OCI-LY7 (cell line): ENCODE measurements at regions of chr1 and their contacts with region 1.

Region 1: GRCh38 chr1:248825909-248826760 is at the start of gene SH3BP5L:
- DNase-seq: peak; percentile 95
- H3K4me3 ChIP-seq: peak within 1 kb of the TSS; percentile 73
- H3K27ac ChIP-seq: peak within 1 kb of the TSS; percentile 78
- H3K4me1 ChIP-seq: peaks cover 40% of the 10 kb centered on the region
- CTCF ChIP-seq: peak; percentile 95
- total RNA-seq, gene SH3BP5L: 14.5 and 16.9 TPM in 2 replicates

Region 2: DNA sequence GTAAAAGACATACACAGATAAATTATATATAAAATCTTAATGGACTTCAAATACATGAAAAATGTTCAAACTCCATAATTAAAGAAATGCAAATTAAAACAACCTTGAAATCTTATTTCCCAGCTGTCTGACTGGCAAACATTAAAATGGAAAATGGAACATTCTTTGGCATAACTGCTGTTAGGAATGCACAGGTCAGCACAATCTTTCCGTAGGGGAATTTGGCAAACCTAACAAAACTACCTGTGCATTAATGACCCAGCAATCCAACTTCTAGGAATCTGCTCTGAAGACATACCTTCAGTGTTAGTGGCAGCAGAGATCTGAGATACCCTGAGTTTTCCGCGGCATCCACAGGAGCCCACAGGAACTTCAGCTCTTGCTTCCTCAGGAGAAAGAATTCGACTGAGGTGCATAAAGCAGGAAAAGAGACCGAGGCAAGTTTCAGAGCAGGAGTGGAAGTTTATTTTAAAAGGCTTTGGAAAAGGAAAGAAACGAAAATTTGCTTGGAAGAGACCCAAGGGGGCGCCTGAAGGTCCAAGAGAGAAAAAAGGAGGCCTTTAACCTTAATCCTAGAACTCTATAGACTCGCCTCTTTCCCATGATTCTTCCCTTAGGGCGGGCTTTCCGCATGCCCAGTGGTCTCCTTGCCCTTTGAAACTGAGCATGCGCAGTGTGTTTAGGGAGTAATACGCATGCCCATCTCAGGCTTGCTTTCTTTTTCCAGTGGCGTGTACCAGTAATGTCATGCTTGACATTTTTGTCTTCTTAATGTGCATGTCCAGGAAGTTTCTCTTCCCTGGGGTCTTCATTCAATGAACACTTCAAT is 95.4 kb before region 1 on chr1:
- CTCF ChIA-PET with region 1: no interaction called
- POLR2A ChIA-PET with region 1: no interaction called
- intact Hi-C with region 1: no loop called
- DNase-seq: no peak
- H3K4me3 ChIP-seq: no peak overlapping the region
- H3K27ac ChIP-seq: no peak overlapping the region
- H3K4me1 ChIP-seq: no peaks in the 10 kb centered on the region
- CTCF ChIP-seq: no peak

Region 3: DNA sequence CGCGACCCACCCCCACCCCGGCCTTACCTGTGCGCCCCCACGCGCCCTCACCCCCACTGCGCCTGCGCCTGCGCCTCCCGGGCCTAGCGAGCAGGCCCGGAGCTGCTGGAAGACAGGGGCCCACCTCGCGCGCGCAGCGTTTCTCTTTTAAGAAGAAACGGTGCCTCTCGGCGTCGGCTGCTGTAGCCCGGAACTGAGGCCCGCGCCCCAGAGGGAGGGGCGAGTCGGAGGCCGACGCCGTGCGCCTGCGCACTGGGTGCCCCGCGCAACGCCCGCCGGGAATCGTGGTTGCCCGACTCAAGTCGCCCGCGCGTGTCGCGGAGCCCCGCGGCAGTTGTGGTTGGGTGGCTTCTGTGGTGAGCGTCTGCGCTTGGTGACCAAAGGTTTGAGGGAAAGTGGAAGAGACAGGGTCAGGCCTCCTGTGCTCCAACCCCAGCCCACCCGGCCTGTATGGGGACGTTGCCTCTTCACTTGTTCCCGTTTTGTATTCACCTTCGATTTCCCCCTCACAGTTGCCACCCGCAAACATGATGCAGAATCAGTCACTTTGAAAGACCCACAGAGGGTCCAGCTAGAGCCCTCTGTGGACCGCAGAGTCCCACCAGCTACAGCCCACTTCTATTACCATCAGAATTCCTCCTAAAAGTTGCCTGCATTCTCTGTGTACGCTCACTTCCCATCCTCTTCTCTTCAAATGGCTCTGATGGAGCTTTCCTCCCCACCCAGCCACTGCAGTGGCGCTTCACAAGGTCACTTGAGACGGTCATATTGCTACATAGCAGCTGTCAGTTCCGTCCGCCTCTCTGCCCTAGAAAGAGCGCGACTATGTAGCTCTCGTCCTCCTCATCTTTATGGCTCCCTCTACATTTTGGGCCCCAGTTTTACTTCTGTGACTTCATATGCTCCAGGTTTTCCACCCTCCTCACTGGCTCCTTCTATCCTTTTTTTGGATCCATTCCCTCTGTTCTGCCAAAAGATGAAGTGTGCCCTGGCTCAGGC is 33.1 kb after region 1 on chr1 and contains the start of gene ZNF692:
- CTCF ChIA-PET with region 1: interaction called, 4 read pairs
- POLR2A ChIA-PET with region 1: interaction called, 31 read pairs
- intact Hi-C with region 1: loop called (anchors 1 kb)
- DNase-seq: peak; percentile 99
- H3K4me3 ChIP-seq: peak within 1 kb of the TSS; percentile 79
- H3K27ac ChIP-seq: peak within 1 kb of the TSS; percentile 72
- H3K4me1 ChIP-seq: peaks cover 39% of the 10 kb centered on the region
- CTCF ChIP-seq: no peak
- total RNA-seq, gene ZNF692: 49.7 and 65.0 TPM in 2 replicates

Region 4: GRCh38 chr1:248886237-248886895 is 60.2 kb after region 1 on chr1:
- CTCF ChIA-PET with region 1: no interaction called
- POLR2A ChIA-PET with region 1: no interaction called
- intact Hi-C with region 1: no loop called
- DNase-seq: no peak
- H3K4me3 ChIP-seq: no peak overlapping the region
- H3K27ac ChIP-seq: no peak overlapping the region
- H3K4me1 ChIP-seq: peaks cover 24% of the 10 kb centered on the region
- CTCF ChIP-seq: no peak

Region 5: DNA sequence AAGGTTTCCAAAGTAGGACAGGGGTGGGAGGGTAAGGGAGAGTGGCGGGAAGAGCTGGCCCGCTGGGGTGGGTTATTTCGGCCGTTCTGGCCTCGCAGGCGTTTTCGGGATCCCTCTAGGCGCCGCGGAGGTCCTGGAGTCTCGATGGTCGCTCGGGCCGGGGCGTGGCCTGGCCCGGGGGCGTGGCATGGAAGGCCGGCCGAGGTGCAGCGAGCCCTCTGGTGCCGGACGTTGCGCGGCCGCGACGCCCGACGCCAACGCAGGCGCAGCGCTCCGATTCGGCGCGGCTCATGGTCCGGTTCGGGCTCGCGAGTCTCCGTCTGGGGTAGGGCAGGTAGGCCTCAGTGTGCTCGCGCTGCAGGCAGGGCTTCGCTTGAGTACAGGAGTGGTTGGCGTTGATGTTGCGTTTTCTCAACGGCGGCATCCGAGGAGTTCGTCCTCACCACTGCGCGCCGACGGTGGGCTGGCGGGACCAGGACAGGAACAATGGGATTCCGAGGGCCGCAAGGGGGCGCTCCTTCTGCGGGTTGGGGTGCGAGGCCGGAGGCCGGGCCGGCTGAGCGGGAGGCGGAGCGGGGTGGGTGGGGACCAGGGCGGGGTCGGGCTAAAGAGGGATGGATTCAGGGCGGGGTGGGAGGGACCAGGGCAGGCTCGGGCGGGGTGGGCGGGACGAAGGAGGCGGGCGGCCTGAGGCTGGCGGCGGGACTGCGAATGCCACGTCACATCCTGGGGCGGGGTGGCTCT is 80.0 kb after region 1 on chr1 and contains the start of gene PGBD2:
- CTCF ChIA-PET with region 1: no interaction called
- POLR2A ChIA-PET with region 1: interaction called, 3 read pairs
- intact Hi-C with region 1: loop called (anchors 1 kb)
- DNase-seq: peak; percentile 95
- H3K4me3 ChIP-seq: peak within 1 kb of the TSS; percentile 72
- H3K27ac ChIP-seq: peak within 1 kb of the TSS; percentile 68
- H3K4me1 ChIP-seq: peaks cover 16% of the 10 kb centered on the region
- CTCF ChIP-seq: peak; percentile 74
- total RNA-seq, gene PGBD2: 9.2 and 13.0 TPM in 2 replicates